HepG2 (cell line): ENCODE measurements at regions of chr2 and their contacts with region 1.

Region 1: DNA sequence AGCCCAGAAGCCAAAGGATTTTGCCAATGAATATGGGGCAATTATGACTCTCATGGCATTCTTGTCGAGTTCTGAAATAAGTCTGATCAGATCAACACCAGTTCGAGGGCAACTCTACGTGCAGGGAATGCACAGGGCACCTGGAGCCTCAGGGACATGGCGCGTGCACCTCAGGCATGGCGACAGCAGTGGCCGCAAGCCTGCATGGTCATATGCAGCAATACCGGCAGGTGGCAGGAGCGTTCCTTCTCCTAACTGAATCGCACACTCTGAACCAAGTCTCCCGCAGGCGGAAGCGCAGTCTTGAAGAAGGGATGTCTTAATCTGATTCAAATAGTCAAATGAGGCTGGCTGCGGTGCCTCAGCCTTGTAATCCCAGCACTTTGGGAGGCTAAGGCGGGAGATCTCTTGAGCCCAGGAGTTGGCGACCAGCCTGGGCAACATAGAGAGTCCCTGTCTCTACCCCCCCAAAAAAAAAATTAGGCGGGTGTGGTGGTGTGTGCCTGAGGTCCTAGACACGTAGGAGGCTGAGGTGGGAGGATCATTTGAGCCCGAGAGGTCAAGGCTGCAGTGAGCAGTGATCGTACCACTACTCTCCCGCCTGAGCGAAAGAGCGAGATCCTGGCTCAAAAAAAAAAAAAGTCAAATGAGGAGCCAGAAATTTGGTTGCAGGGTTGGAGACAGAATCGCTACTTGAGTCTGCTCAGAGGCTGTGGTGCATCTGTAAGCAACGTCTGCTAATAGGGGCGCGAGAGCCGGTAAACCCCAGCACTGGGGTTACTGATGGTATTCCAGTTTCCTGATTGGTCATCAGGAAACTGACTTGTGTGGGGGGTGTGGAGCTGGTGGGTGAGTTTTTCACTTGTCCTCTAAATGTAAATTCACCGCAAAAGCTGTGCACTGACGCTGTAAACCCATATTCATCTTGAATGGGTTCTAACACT is 28.8 kb downstream of the FHL2 start:
- DNase-seq: peak; percentile 68
- ATAC-seq: peak; percentile 96
- H3K4me3 ChIP-seq: no peak overlapping the region
- H3K27ac ChIP-seq: no peak overlapping the region
- H3K4me1 ChIP-seq: peaks cover 16% of the 10 kb centered on the region
- H3K27me3 ChIP-seq: no peaks in the 10 kb centered on the region
- CTCF ChIP-seq: peak; percentile 99
- EP300 ChIP-seq: no peak
- POLR2A ChIP-seq: no peak
- RAD21 ChIP-seq: peak; percentile 96

Region 2: DNA sequence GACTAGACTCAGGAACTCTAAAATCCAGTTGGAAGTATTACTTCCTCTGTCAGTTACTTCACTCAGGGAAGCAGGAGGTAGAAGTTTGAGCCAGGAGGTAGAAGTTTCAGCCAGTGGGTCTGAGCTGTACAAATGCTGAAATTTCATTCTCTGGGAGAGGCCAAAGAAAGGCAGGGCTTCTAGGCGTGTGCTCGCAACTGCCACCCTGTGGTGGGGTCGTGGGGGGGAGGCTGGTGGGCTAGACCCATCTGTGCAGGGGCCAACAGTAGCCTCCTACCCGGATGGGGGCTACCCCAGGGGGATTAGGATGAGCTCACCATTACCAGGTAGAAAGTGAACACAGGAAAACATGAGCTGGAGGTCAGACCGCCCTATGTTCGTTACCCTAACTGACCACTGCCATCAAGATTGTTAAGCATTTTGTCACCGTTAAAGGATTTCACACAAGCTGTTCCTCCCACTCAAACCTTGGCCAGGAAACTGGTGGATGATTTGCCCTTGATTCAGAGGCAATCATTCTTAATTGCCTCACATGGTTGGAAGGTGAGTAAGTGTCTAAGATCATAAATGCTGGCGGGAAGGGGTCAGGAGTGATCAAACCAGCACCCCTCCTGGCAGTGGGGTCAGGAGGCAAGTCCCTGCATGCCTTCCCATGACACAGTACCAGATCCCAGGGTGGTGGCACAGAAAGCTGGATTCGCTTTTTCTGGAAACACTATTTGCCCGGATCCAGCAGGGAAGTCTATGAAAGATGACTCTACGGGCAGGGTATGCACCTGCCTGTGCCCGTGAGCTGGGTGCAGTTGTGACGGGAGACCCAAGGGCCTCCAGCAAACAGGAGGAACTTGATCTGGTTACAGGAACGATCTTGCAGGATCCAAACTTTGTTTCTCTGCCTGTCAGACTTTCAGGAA is 34.0 kb after region 1 on chr2:
- CTCF ChIA-PET with region 1: interaction called, 6 read pairs
- POLR2A ChIA-PET with region 1: no interaction called
- in situ Hi-C with region 1: no loop called
- intact Hi-C with region 1: loop called (anchors 2 kb)
- DNase-seq: no peak
- ATAC-seq: peak; percentile 41
- H3K4me3 ChIP-seq: 0 out of 6 replicates have a peak overlapping the region, but pooled peaks of 1 of the 3 experiments have one; percentile 13
- H3K27ac ChIP-seq: no peak overlapping the region
- H3K4me1 ChIP-seq: peaks cover 20% of the 10 kb centered on the region
- H3K27me3 ChIP-seq: peaks cover 0 to 28% of the 10 kb centered on the region in 2 experiments; a peak in 3 of 5 replicates
- CTCF ChIP-seq: peak; percentile 60
- EP300 ChIP-seq: no peak
- POLR2A ChIP-seq: no peak
- RAD21 ChIP-seq: no peak

Region 3: GRCh38 chr2:105409717-105410116 is 39.7 kb after region 1 on chr2:
- CTCF ChIA-PET with region 1: no interaction called
- POLR2A ChIA-PET with region 1: no interaction called
- in situ Hi-C with region 1: loop called (anchors 5 kb)
- intact Hi-C with region 1: loop called (anchors 2 kb)
- DNase-seq: no peak
- ATAC-seq: no peak; the same call in 2 of the 3 replicates
- H3K4me3 ChIP-seq: no peak overlapping the region
- H3K27ac ChIP-seq: no peak overlapping the region
- H3K4me1 ChIP-seq: peaks cover 15% of the 10 kb centered on the region
- H3K27me3 ChIP-seq: peaks cover 1 to 46% of the 10 kb centered on the region in 2 experiments; a peak in 4 of 5 replicates
- CTCF ChIP-seq: no peak
- EP300 ChIP-seq: no peak
- POLR2A ChIP-seq: no peak
- RAD21 ChIP-seq: no peak

Region 4: DNA sequence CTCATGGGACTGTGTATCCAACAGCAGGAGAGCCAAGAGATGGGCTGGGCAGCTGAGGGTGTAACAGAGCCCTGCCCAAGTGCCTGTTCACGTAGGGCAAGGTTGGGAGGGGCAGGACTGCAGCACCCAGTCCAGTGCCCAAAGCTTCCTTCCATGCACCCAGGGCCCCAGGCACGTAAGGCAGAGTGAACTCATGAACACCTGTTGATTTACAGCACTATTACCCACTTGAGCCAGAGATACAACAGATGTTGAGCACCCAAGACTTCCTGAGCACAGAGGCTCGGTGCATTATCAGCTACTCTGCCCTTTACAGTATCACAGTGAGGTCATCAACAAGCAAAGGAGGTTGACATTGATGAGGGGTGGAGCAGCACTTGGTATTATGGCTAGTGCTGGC is 79.1 kb after region 1 on chr2:
- CTCF ChIA-PET with region 1: no interaction called
- POLR2A ChIA-PET with region 1: no interaction called
- in situ Hi-C with region 1: no loop called
- intact Hi-C with region 1: no loop called
- DNase-seq: no peak
- ATAC-seq: no peak
- H3K4me3 ChIP-seq: no peak overlapping the region
- H3K27ac ChIP-seq: no peak overlapping the region
- H3K4me1 ChIP-seq: no peaks in the 10 kb centered on the region
- H3K27me3 ChIP-seq: no peaks in the 10 kb centered on the region; a peak in 1 of 5 replicates
- CTCF ChIP-seq: no peak
- EP300 ChIP-seq: no peak
- POLR2A ChIP-seq: no peak
- RAD21 ChIP-seq: no peak

Region 5: GRCh38 chr2:105521205-105521604 is 151.2 kb after region 1 on chr2:
- CTCF ChIA-PET with region 1: interaction called, 78 read pairs
- POLR2A ChIA-PET with region 1: no interaction called
- in situ Hi-C with region 1: loop called (anchors 5 kb)
- intact Hi-C with region 1: loop called (anchors 1 kb)
- DNase-seq: peak; percentile 18
- ATAC-seq: no peak
- H3K4me3 ChIP-seq: no peak overlapping the region
- H3K27ac ChIP-seq: no peak overlapping the region
- H3K4me1 ChIP-seq: peaks cover 10% of the 10 kb centered on the region; the same call in 1 of the 2 replicates
- H3K27me3 ChIP-seq: peaks cover 0 to 12% of the 10 kb centered on the region in 2 experiments; a peak in 2 of 5 replicates
- CTCF ChIP-seq: peak; percentile 57
- EP300 ChIP-seq: no peak
- POLR2A ChIP-seq: no peak
- RAD21 ChIP-seq: peak; percentile 60; the same call in 1 of the 2 replicates

Region 6: GRCh38 chr2:105545730-105546627 is 176.0 kb after region 1 on chr2:
- CTCF ChIA-PET with region 1: interaction called, 11 read pairs
- POLR2A ChIA-PET with region 1: no interaction called
- in situ Hi-C with region 1: no loop called
- intact Hi-C with region 1: loop called (anchors 1 kb)
- DNase-seq: peak; percentile 67
- ATAC-seq: peak; percentile 94
- H3K4me3 ChIP-seq: no peak overlapping the region
- H3K27ac ChIP-seq: no peak overlapping the region
- H3K4me1 ChIP-seq: no peaks in the 10 kb centered on the region
- H3K27me3 ChIP-seq: peaks cover 0 to 26% of the 10 kb centered on the region in 2 experiments; a peak in 3 of 5 replicates
- CTCF ChIP-seq: peak; percentile 79
- EP300 ChIP-seq: no peak
- POLR2A ChIP-seq: no peak
- RAD21 ChIP-seq: peak; percentile 42; the same call in 1 of the 2 replicates